Endothelial cell of umbilical vein (primary cell): ENCODE measurements at regions of chr1 and their contacts with region 1.

Region 1: DNA sequence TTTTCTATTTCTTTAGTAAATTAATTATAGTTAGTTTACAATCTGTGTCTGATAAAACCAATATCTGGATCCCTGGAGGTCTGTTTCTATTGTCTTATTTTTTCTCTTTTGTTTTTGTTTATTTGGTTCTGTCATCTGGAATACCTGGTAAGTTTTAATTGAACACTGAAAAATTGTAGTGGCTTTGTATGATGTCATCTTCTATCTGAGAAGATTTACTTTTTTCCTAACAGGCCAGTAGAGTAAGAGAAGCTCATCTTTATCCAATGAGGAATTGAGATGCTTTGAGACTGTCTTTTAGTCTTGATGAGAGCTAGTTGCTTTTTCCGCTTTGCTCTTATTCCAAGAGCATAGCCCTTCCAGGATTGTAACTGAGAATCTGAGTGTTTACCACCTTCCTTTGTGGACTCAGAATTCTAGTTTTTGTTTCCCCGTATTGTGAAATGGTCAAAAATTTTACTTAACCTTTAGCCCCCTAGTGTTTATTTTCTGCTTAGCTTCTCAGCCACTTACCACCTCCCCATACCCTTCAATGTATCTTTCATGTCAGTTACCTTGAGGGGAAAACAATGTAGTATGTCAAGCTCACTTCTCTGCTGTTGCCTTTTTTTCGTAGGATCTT is 25.0 kb downstream of the PTGFRN start:
- DNase-seq: no peak
- H3K4me3 ChIP-seq: no peak overlapping the region
- H3K27ac ChIP-seq: no peak overlapping the region
- H3K4me1 ChIP-seq: no peaks in the 10 kb centered on the region
- H3K27me3 ChIP-seq: no peaks in the 10 kb centered on the region
- CTCF ChIP-seq: peak in 1 of 2 donors; percentile 6
- POLR2A ChIP-seq: no peak

Region 2: DNA sequence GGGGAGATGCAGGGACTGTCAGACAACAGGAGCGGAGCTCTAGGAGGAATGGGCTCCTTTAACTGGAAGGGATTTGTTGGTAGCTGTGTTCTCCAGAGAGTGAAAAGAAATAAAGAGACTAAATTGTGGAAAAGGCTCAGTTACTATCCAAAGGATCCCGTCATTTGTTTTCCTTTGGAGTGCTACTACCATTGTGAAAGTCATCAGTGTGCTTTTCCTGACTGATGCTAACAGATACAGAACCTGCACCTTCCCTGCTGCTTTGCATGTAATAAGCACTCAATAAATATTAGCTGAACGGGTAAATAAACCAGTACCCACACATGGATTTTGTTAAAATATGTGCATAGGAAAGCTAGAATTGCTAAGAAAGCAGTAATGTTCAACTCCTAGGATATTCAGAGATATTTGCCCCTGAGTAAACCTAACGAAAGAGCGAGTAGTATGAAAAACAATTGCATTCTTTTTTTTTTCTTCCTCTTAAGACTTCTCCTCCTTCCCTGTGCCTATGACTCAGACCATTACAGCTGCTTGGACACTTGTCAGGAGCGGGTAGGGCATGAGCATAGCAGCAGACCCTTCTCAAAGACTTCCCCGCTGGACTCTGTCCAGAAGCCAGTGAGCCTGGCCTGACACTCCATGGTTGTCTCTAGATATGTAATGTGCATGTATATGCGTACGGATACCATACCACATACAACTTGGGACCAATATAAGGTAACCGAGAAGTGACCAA is 16.7 kb after region 1 on chr1:
- CTCF ChIA-PET with region 1: interaction called, 3 read pairs
- POLR2A ChIA-PET with region 1: no interaction called
- dilution Hi-C with region 1: no loop called
- intact Hi-C with region 1: loop called (anchors 2 kb)
- DNase-seq: peak; percentile 77
- H3K4me3 ChIP-seq: no peak overlapping the region
- H3K27ac ChIP-seq: no peak overlapping the region
- H3K4me1 ChIP-seq: peaks cover 7% of the 10 kb centered on the region
- H3K27me3 ChIP-seq: no peaks in the 10 kb centered on the region
- CTCF ChIP-seq: no peak
- POLR2A ChIP-seq: no peak